Heart right ventricle (tissue), 16 donors: ENCODE measurements at regions of chr5 and their contacts with region 1.

Region 1: GRCh38 chr5:10695055-10695649 is 65.9 kb downstream of the DAP start:
- DNase-seq: peak; percentile 71 to 75
- ATAC-seq: peak; percentile 81 to 92 (median 88)
- H3K4me3 ChIP-seq: no peak overlapping the region
- H3K27ac ChIP-seq: no peak overlapping the region
- H3K4me1 ChIP-seq: peaks cover 0 to 18% (median 10%) of the 10 kb centered on the region in 9 donors
- H3K27me3 ChIP-seq: no peaks in the 10 kb centered on the region
- CTCF ChIP-seq: peak; percentile 42 to 88 (median 79)

Region 2: GRCh38 chr5:10452768-10453331 is 242.3 kb before region 1 on chr5:
- intact Hi-C with region 1: loop called in 2 of 10 experiments (anchors 5 kb)
- DNase-seq: peak in 1 of 2 donors; percentile 25
- ATAC-seq: peak; percentile 54 to 87 (median 80)
- H3K4me3 ChIP-seq: no peak overlapping the region
- H3K27ac ChIP-seq: no peak overlapping the region
- H3K4me1 ChIP-seq: peaks cover 8 to 39% (median 11%) of the 10 kb centered on the region in 9 donors
- H3K27me3 ChIP-seq: no peaks in the 10 kb centered on the region
- CTCF ChIP-seq: peak; percentile 47 to 89 (median 77)

Region 3: DNA sequence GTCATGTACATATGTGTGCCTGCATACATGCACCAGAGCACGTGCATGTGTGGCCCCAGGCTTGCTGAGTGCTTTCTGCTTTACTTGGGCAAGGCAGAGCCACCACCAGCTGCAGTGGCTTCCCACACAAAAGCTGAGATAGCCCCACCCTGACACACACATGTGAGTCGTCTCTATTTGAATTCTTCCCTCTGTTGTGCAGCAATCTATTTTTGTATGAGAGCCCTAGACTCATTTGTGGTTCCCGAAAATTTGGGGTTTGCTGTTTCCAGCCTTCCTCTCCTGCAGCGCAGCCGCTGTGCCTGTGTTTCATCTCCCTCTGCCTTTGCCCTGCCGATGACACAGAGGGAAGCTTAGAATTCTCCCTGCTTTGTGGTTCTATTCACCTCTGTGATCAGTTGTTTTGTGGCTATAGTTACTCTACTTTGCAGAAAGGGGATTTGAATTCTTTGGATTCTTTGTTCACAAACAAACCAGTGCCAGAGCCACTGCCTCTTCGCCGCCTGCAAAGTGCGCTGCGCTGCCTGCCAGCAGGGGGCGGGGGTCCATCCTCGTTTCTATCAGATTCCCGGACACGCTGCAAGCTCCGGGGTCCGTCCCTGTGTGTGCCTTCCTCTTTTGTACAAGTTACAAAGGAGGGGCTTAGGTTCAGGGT is 161.7 kb after region 1 on chr5:
- intact Hi-C with region 1: loop called in 8 of 10 experiments (anchors 5 to 10 kb)
- DNase-seq: peak; percentile 25 to 49
- ATAC-seq: peak in 7 of 8 donors; percentile 34 to 76 (median 63)
- H3K4me3 ChIP-seq: peak overlapping the region in 4 of 10 donors; percentile 7 to 30 (median 23)
- H3K27ac ChIP-seq: no peak overlapping the region
- H3K4me1 ChIP-seq: peaks cover 0 to 36% (median 0%) of the 10 kb centered on the region in 9 donors
- H3K27me3 ChIP-seq: peaks cover 0 to 16% (median 9%) of the 10 kb centered on the region in 7 donors
- CTCF ChIP-seq: peak; percentile 45 to 83 (median 78)

Region 4: DNA sequence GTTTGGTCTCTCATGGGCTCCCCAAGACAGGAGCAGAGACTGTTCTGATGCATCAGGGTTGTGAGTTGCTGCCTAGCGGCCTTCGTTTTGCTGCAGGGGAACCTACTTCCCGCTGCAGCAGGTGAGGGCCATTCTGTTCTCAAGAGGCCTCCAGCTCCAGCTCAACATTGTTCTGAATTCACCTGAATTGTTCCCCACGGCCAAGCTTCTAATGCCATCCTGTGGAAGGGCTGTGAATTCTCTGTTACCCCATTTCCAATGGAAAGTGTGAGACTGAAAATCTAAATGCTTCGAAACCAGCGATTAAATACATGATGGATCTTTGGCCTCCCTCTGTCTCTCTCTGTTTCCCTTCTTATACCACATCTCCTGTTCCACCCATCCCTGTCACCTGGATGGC is 415.0 kb after region 1 on chr5:
- intact Hi-C with region 1: loop called in 1 of 10 experiments (anchors 5 kb)
- DNase-seq: no peak
- ATAC-seq: no peak
- H3K4me3 ChIP-seq: no peak overlapping the region
- H3K27ac ChIP-seq: no peak overlapping the region
- H3K4me1 ChIP-seq: no peaks in the 10 kb centered on the region
- H3K27me3 ChIP-seq: no peaks in the 10 kb centered on the region
- CTCF ChIP-seq: peak in 5 of 9 donors; percentile 8 to 43 (median 27)

Region 5: GRCh38 chr5:11443831-11444230 is 748.7 kb after region 1 on chr5:
- intact Hi-C with region 1: no loop called
- DNase-seq: no peak
- ATAC-seq: no peak
- H3K4me3 ChIP-seq: no peak overlapping the region
- H3K27ac ChIP-seq: no peak overlapping the region
- H3K4me1 ChIP-seq: no peaks in the 10 kb centered on the region
- H3K27me3 ChIP-seq: no peaks in the 10 kb centered on the region
- CTCF ChIP-seq: no peak

Region 6: DNA sequence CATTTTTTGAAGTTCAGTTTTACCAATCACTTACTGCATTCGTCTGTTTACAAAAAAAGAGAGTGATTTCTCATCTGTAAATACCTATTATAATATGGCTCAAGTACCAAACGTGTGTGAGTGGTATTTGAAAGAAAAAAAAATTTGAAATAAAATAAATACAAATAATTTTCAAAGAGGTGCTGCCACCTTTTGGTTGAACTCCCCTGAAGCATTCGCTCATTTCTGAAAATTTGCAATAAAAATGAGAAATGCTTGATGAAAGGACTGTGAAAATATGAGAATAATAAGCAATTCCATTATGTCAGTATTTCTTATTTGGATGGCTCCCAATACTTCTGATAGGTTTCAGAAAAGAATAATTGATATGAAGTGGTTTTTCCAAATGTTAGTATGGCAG is 799.2 kb after region 1 on chr5:
- intact Hi-C with region 1: loop called in 1 of 10 experiments (anchors 10 kb)
- DNase-seq: no peak
- ATAC-seq: no peak
- H3K4me3 ChIP-seq: no peak overlapping the region
- H3K27ac ChIP-seq: no peak overlapping the region
- H3K4me1 ChIP-seq: no peaks in the 10 kb centered on the region
- H3K27me3 ChIP-seq: no peaks in the 10 kb centered on the region
- CTCF ChIP-seq: peak; percentile 6 to 57 (median 37)